ENCODE measurements at regions of chr1 and their contacts with region 1.

Region 1: DNA sequence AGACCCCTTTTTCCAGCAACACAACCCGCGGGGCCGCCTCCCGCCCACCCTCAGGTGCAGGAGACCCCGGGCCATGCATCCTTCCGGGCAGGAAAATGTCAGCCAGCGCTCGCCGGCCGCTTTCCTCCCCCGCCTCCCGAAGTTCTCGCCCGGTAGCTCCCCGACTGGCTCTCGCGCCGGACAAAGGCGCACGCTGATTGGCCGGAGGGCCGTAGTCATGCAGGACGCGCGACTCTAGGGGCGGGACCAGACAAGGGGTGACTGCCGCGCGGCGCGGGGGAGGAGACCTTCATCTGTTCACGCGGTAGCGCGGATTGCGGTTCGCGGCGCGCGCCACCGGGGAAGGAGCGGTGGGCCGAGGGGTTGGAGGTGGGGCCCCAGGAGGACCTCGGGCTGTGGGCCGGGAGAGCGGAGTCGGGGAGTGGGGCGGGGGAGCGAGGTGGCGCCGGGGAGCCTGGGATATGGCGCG is at the start of gene FLVCR1:
- DNase-seq: peak; percentile 100
- H3K4me3 Mint-ChIP-seq: no peak within 1 kb of the TSS
- H3K27ac Mint-ChIP-seq: peak within 1 kb of the TSS; percentile 99
- H3K4me1 Mint-ChIP-seq: peaks cover 11% of the 10 kb centered on the region
- H3K27me3 Mint-ChIP-seq: no peaks in the 10 kb centered on the region
- CTCF ChIP-seq: no peak
- total RNA-seq, gene FLVCR1: 16.5 and 17.9 TPM in 2 replicates

Region 2: GRCh38 chr1:212710566-212710965 is 147.5 kb before region 1 on chr1:
- CTCF ChIA-PET with region 1: no interaction called
- POLR2A ChIA-PET with region 1: no interaction called
- intact Hi-C with region 1: no loop called
- DNase-seq: no peak
- H3K4me3 Mint-ChIP-seq: no peak overlapping the region
- H3K27ac Mint-ChIP-seq: no peak overlapping the region
- H3K4me1 Mint-ChIP-seq: no peaks in the 10 kb centered on the region
- H3K27me3 Mint-ChIP-seq: peaks cover 4% of the 10 kb centered on the region
- CTCF ChIP-seq: no peak

Region 3: GRCh38 chr1:212814537-212815334 is 43.3 kb before region 1 on chr1:
- CTCF ChIA-PET with region 1: interaction called, 7 read pairs
- POLR2A ChIA-PET with region 1: interaction called, 16 read pairs
- intact Hi-C with region 1: no loop called
- DNase-seq: peak; percentile 57
- H3K4me3 Mint-ChIP-seq: no peak overlapping the region
- H3K27ac Mint-ChIP-seq: no peak overlapping the region
- H3K4me1 Mint-ChIP-seq: peaks cover 4% of the 10 kb centered on the region
- H3K27me3 Mint-ChIP-seq: no peaks in the 10 kb centered on the region
- CTCF ChIP-seq: peak; percentile 52

Region 4: GRCh38 chr1:212847549-212847948 is 10.5 kb before region 1 on chr1 and contains the start of gene SPATA45:
- CTCF ChIA-PET with region 1: interaction called, 5 read pairs
- POLR2A ChIA-PET with region 1: interaction called, 15 read pairs
- intact Hi-C with region 1: no loop called
- DNase-seq: no peak
- H3K4me3 Mint-ChIP-seq: no peak within 1 kb of the TSS
- H3K27ac Mint-ChIP-seq: no peak within 1 kb of the TSS
- H3K4me1 Mint-ChIP-seq: no peaks in the 10 kb centered on the region
- H3K27me3 Mint-ChIP-seq: no peaks in the 10 kb centered on the region
- CTCF ChIP-seq: no peak
- total RNA-seq, gene SPATA45: not detected in 2 replicates

Region 5: DNA sequence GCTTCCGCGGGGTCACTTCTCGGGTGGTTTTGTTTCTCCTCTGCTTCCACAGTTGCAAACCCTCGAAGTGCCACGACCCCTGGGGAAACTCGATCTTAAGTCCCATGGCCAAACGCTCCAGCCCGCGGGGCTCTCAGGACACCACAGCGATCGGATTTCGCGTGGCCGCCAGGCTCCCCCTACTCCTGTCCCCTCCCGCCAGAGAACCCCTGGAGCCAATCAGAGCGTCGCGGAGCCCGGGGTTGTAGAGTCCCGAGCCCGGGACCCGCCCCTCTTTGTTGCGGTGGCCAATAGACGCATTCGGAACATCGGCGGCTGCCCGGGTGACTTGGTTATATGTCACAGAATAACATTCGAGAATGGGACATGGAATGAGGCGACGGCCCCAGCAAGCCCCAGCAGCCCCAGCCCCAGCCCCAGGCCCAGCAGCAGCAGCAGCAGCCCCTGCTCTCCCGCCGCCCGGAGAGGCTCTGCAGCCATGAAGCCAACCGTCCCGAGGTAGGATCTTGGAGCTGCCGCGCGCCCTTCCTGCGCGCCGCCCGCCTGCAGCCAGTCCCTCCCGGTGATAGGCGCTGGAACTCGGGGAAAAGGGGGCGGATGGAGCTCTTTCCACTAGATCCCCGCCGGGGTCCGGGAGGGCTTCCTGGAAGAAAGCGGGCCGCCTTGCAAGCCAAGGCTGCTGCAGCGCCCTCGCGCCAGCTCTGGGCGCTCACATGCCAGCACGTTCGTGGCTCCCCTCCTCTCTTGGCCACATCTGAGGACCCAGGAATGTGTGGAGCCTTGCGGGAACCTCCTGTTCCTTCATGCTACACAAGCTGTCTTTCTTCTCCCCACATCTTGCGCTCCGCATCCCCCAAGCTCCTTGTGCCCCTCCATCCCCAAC is 92.5 kb after region 1 on chr1 and contains the start of gene VASH2:
- CTCF ChIA-PET with region 1: interaction called, 3 read pairs
- POLR2A ChIA-PET with region 1: interaction called, 10 read pairs
- intact Hi-C with region 1: no loop called
- DNase-seq: peak; percentile 94
- H3K4me3 Mint-ChIP-seq: peak within 1 kb of the TSS; percentile 85
- H3K27ac Mint-ChIP-seq: no peak within 1 kb of the TSS
- H3K4me1 Mint-ChIP-seq: no peaks in the 10 kb centered on the region
- H3K27me3 Mint-ChIP-seq: peaks cover 19% of the 10 kb centered on the region
- CTCF ChIP-seq: no peak
- total RNA-seq, gene VASH2: not detected in 2 replicates

Region 6: GRCh38 chr1:213094446-213094845 is 236.4 kb after region 1 on chr1:
- CTCF ChIA-PET with region 1: no interaction called
- POLR2A ChIA-PET with region 1: no interaction called
- intact Hi-C with region 1: no loop called
- DNase-seq: no peak
- H3K4me3 Mint-ChIP-seq: no peak overlapping the region
- H3K27ac Mint-ChIP-seq: no peak overlapping the region
- H3K4me1 Mint-ChIP-seq: no peaks in the 10 kb centered on the region
- H3K27me3 Mint-ChIP-seq: no peaks in the 10 kb centered on the region
- CTCF ChIP-seq: no peak

Region 7: DNA sequence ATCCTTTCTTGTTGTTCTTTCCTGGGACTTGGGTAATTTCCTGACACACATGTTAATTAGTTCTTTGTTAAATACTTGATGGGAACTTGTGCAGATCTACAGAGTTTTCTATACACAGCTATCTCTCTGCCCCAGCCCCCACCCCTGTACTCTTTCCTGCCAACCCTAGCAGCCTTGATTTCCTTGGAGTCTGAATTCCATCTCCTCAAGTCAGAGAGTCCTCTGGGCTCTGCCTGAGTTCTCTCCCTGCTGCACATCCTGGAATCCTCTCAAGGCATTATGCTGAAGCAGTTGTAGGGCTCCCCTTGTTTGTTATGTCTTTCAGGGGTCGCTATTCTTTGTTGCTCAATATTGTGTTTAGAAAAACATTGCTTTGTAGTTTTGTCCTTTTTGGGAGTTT is 577.7 kb after region 1 on chr1:
- CTCF ChIA-PET with region 1: no interaction called
- POLR2A ChIA-PET with region 1: no interaction called
- intact Hi-C with region 1: no loop called
- DNase-seq: no peak
- H3K4me3 Mint-ChIP-seq: no peak overlapping the region
- H3K27ac Mint-ChIP-seq: no peak overlapping the region
- H3K4me1 Mint-ChIP-seq: no peaks in the 10 kb centered on the region
- H3K27me3 Mint-ChIP-seq: peaks cover 44% of the 10 kb centered on the region
- CTCF ChIP-seq: no peak